ENCODE measurements at regions of chr14 and their contacts with region 1.

Region 1: GRCh38 chr14:23120541-23121251 is 1.6 kb upstream of the CEBPE start:
- DNase-seq: peak; percentile 90 to 94 (median 93)
- H3K4me3 ChIP-seq: no peak overlapping the region
- H3K27ac ChIP-seq: peak overlapping the region in 1 of 2 donors; percentile 71
- H3K4me1 ChIP-seq: peaks cover 6% of the 10 kb centered on the region
- H3K27me3 ChIP-seq: no peaks in the 10 kb centered on the region
- CTCF ChIP-seq: peak; percentile 100
- EP300 ChIP-seq: no peak
- POLR2A ChIP-seq: peak; percentile 53

Region 2: GRCh38 chr14:23186913-23187654 is 66.4 kb after region 1 on chr14:
- intact Hi-C with region 1: loop called (anchors 1 to 2 kb)
- DNase-seq: peak in 2 of 5 donors; percentile 37 to 75
- H3K4me3 ChIP-seq: no peak overlapping the region
- H3K27ac ChIP-seq: no peak overlapping the region
- H3K4me1 ChIP-seq: peaks cover 1% of the 10 kb centered on the region
- H3K27me3 ChIP-seq: no peaks in the 10 kb centered on the region
- CTCF ChIP-seq: peak; percentile 83 to 97 (median 97)
- EP300 ChIP-seq: no peak
- POLR2A ChIP-seq: no peak

Region 3: DNA sequence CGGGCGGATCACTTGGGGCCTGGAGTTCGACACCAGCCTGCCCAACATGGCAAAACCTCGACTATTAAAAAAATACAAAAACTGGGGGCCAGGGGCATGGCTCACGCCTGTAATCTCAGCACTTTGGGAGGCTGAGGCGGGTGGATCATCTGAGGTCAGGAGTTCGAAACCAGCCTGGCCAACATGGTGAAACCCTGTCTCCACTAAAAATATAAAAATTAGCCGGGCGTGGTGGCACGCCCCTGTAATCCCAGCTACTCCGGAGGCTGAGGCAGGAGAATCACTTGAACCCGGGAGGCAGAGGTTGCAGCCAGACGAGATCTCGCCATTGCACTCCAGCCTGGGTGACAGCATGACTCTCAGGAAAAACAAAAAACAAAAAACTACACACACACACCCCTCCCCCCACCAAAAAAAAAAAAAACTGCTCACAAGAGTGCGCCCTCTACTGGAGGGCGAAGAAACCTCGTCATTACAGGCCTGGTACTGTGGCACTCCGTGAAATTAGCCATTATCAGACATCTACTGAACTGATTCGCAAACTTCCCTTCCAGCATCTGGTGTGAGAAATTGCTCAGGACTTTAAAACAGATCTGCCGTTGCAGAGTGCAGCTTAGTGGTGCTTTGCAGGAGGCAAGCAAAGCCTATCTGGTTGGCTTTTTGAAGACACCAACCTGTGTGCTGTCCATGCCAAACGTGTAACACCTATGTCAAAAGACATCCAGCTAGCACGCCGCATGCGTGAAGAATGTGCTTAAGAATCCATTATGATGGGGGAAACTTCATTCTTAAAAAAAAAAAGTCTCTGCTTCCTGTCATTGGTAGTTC is 174.3 kb after region 1 on chr14:
- intact Hi-C with region 1: loop called in 1 of 4 experiments (anchors 10 kb)
- DNase-seq: peak in 2 of 5 donors; percentile 49 to 50
- H3K4me3 ChIP-seq: no peak overlapping the region
- H3K27ac ChIP-seq: no peak overlapping the region
- H3K4me1 ChIP-seq: no peaks in the 10 kb centered on the region
- H3K27me3 ChIP-seq: no peaks in the 10 kb centered on the region
- CTCF ChIP-seq: peak; percentile 56 to 65 (median 60)
- EP300 ChIP-seq: no peak
- POLR2A ChIP-seq: no peak

Measured in ovary (tissue), 10 donors.